ENCODE measurements at regions of chr7 and their contacts with region 1.

Region 1: GRCh38 chr7:116911801-116912200 is 41.5 kb upstream of the ST7 start:
- DNase-seq: no peak
- ATAC-seq: no peak

Region 2: DNA sequence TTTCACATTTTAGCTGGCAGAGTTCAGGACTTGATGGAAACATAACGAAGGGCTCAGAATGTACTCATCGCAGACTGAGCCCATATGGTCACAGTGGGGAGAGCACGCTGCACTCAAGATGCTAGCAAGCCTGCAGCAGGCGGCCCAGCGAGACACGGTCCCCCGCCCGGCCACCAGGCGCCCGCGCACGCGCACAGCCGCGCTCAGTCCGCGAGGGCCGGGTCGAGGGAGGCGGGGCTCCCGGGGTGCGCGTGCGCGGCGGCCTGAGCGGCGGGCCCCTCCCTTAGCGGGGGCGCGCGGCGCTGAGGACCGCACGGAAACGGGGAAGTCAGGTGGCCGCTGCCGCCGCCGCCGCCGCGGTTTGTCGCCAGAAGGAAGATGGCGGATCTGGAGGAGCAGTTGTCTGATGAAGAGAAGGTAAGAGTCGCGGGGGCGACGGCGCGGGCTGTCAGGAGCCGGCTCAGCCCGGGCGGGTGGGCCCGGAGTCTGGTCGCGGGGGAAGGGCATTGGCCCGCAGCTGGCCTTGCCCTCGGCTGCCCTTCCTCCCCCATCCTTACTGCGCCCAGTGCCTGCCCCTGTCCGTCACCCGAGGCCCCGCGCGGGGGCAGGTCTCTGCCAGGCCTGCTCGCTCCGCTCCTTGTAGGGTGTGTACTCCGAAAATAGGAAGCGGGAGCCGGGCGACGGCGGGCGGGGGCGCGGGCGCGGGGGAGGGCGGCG is 49.4 kb before region 1 on chr7 and contains the start of gene CAPZA2:
- intact Hi-C with region 1: loop called (anchors 10 kb)
- DNase-seq: peak; percentile 96
- ATAC-seq: peak; percentile 98
- total RNA-seq, gene CAPZA2: 344 TPM